Astrocyte of the cerebellum (primary cell): ENCODE measurements at regions of chr6 and their contacts with region 1.

Region 1: DNA sequence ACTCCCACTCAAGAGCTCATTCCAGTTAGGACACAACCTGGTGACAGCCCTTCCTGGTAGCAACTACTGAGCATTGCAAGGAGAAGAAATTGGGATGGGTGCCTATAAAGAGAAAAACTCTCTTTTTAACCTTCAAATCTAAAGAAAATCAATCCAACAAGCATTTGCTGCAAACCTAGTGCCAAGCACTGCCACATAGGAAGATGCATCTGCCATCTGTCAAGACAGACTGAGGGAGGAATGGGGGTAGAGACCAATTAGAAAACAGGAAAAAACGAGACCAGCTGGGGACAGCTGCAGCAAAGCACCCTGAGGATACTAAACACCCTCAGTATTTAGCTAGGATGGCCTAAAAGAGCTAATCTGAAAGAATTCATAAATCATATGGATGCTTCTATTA is 27.9 kb downstream of the HLA-DMB start:
- DNase-seq: no peak
- H3K4me3 ChIP-seq: no peak overlapping the region
- CTCF ChIP-seq: no peak

Region 2: GRCh38 chr6:32947552-32948465 is 34.9 kb after region 1 on chr6:
- in situ Hi-C with region 1: loop called (anchors 5 kb)
- DNase-seq: no peak
- H3K4me3 ChIP-seq: no peak overlapping the region
- CTCF ChIP-seq: peak; percentile 60

Region 3: DNA sequence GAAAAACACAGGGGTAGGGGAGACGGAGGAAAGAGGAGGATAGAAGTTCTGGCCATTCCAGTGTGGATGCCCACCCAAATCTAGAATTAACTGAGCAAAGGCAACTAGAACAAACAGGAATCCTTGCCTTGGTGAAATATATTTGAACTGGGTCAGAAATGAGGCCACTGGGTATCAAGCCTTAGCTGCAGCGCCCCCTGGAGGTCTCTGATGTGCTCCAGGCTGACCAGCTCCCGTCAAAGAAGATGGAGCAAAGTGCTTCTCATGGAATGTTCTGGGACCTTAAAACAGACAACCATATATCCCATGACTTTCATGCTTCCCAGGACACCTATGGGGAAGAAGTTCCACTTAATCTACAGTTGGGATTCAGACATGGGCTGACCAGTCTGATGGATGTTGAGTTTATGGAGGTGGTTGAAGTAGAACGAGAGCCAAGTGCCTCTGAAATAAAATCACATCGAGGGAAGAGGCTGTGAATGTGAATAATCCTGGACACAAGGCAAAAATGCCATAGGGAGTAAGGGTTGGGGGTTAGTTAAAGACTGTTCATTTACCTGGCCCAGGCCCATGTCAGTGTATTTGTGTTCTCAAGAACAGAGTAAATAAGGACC is 213.3 kb after region 1 on chr6:
- in situ Hi-C with region 1: no loop called
- DNase-seq: no peak
- H3K4me3 ChIP-seq: no peak overlapping the region
- CTCF ChIP-seq: peak; percentile 34